Endothelial cell of umbilical vein (primary cell): ENCODE measurements at regions of chr13 and their contacts with region 1.

Region 1: GRCh38 chr13:41019011-41019487 is at the start of gene ELF1:
- DNase-seq: peak; percentile 72
- H3K4me3 ChIP-seq: peak within 1 kb of the TSS; percentile 23 to 91 (median 68)
- H3K27ac ChIP-seq: peak within 1 kb of the TSS; percentile 86
- H3K4me1 ChIP-seq: peaks cover 3% of the 10 kb centered on the region
- H3K27me3 ChIP-seq: no peaks in the 10 kb centered on the region
- CTCF ChIP-seq: no peak
- POLR2A ChIP-seq: no peak
- total RNA-seq, gene ELF1: 61.2 and 62.5 TPM in 2 replicates

Region 2: DNA sequence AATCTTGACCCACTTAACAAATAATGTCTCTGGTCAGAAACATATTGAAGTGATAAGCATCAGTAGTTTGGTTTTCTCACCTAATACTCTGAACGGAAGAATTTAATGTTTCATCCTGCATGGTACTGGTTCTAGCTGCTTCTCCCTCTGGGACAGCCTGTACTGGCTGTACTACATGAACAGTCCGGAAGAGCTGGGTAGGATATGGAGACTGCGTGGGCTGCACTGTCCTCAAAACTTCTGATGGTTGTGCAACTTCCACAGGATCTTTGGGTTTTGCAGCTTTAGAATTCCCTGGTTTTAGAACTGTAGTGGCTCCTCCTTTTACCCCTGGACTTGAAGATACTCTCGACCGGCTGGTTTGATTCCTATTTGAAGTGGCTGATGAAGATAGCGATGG is 78.2 kb before region 1 on chr13:
- CTCF ChIA-PET with region 1: no interaction called
- POLR2A ChIA-PET with region 1: no interaction called
- dilution Hi-C with region 1: no loop called
- intact Hi-C with region 1: no loop called
- DNase-seq: no peak
- H3K4me3 ChIP-seq: no peak overlapping the region
- H3K27ac ChIP-seq: no peak overlapping the region
- H3K4me1 ChIP-seq: no peaks in the 10 kb centered on the region
- H3K27me3 ChIP-seq: no peaks in the 10 kb centered on the region
- CTCF ChIP-seq: no peak
- POLR2A ChIP-seq: no peak

Region 3: DNA sequence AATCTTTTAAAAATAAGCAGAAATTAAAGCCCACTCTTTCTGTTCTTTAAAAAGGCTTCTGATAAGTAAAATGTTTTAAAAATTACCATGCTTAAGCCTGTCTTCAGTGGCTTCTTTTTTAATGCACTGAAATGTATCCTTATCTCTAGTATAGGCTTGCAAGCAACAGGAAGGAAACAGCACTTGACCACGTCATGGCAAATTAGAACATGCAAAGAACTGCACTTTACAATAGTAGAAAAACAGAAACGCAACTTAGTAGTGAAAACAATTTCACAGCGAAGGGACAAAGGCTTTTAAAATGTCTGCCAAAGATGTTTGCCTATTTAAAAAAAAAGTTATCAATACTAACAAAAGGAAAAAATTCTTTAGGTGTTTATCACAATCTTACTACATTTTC is 36.3 kb before region 1 on chr13:
- CTCF ChIA-PET with region 1: interaction called, 4 read pairs
- POLR2A ChIA-PET with region 1: no interaction called
- dilution Hi-C with region 1: no loop called
- intact Hi-C with region 1: loop called (anchors 2 kb)
- DNase-seq: peak; percentile 95
- H3K4me3 ChIP-seq: peak overlapping the region; percentile 51 to 97 (median 91)
- H3K27ac ChIP-seq: peak overlapping the region; percentile 99
- H3K4me1 ChIP-seq: peaks cover 69% of the 10 kb centered on the region
- H3K27me3 ChIP-seq: no peaks in the 10 kb centered on the region
- CTCF ChIP-seq: no peak
- POLR2A ChIP-seq: peak; percentile 69

Region 4: GRCh38 chr13:41054212-41054877 is 35.3 kb after region 1 on chr13:
- CTCF ChIA-PET with region 1: interaction called, 14 read pairs
- POLR2A ChIA-PET with region 1: no interaction called
- dilution Hi-C with region 1: no loop called
- intact Hi-C with region 1: no loop called
- DNase-seq: peak; percentile 60
- H3K4me3 ChIP-seq: no peak overlapping the region
- H3K27ac ChIP-seq: no peak overlapping the region
- H3K4me1 ChIP-seq: peaks cover 27% of the 10 kb centered on the region
- H3K27me3 ChIP-seq: no peaks in the 10 kb centered on the region
- CTCF ChIP-seq: peak; percentile 20 to 35
- POLR2A ChIP-seq: no peak